ENCODE measurements at regions of chr4 and their contacts with region 1.

Region 1: GRCh38 chr4:1260418-1261106 is 11.6 kb upstream of the CTBP1 start:
- DNase-seq: no peak
- H3K4me3 ChIP-seq: no peak overlapping the region
- H3K27ac ChIP-seq: no peak overlapping the region
- H3K4me1 ChIP-seq: no peaks in the 10 kb centered on the region
- H3K27me3 ChIP-seq: no peaks in the 10 kb centered on the region
- CTCF ChIP-seq: no peak
- EP300 ChIP-seq: no peak
- POLR2A ChIP-seq: no peak

Region 2: DNA sequence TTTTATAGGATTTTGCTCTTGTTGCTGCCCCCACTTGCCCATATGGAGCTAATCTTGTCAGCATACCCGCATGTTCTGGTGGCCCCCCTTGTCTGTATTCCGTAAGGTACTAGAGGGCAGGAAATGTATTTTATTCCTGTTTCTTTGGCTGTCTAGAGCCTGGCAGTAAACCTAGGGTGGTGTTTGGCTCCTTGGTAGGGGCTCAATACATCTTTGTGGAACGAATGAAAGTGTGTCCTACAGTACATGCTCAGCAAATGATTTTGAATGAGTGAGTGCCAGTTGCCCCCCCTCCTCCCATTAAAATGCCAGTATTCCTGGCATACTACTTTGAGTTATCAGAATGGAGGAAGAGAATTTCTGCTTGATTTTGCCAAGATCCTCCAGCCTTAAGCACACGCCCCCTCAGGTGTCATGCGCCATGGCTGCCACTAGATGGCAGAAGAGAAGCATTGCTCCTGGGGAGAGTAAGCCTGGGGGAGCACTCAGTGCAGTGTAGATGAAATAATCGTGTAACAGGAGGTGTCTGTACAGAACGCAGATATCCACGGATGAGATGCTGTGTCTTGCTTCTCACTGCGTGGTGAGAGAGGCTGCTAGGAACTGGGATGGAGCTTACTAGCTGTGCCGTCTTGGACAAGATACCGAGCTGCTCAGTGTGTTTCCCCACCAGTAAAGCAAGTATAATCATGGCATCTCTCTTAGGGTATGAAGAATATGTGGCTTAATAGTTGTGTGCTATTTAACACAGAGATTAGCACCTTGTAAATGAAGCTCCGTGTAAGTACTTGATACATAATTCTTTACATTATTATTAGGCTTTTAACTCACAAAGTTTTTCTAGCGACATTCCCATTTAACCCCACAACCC is 130.0 kb before region 1 on chr4:
- in situ Hi-C with region 1: loop called in 1 of 4 experiments (anchors 5 kb)
- intact Hi-C with region 1: no loop called
- DNase-seq: peak; percentile 70
- H3K4me3 ChIP-seq: no peak overlapping the region
- H3K27ac ChIP-seq: no peak overlapping the region
- H3K4me1 ChIP-seq: no peaks in the 10 kb centered on the region
- H3K27me3 ChIP-seq: no peaks in the 10 kb centered on the region
- CTCF ChIP-seq: peak; percentile 96 to 100 (median 98)
- EP300 ChIP-seq: no peak
- POLR2A ChIP-seq: no peak

Region 3: DNA sequence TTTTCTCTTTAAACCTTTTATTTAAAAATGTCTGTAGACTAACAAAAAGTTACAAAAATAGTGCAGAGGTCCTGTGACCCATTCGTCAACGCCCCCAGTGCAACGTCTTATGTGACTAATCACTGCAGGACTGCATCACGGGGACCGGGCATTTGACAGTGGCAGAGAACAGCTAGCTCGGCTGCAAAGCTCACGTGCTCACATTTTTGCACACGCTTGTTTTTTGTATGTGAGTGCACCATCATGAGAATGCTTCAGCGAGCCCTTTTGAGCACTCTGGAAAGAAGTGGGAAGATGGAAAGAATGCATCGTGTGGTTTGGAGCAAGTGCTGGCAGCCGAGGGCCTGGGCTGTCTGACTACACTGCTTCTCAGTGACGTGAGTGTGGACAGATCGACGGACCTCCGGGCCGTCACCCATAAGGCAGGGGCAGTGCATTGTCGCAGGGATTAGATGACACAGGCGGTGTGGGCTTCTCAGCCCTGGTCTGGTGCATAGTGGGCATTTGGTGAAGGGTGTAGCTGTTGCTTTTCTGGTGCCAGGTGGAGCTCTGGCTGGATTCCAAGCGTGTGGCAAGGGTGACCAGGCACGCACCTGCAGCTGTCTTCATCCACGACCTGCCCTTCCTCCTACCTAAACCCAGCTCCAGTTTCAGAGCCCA is 105.9 kb before region 1 on chr4:
- in situ Hi-C with region 1: loop called in 3 of 4 experiments (anchors 10 to 25 kb)
- intact Hi-C with region 1: no loop called
- DNase-seq: peak; percentile 55
- H3K4me3 ChIP-seq: no peak overlapping the region
- H3K27ac ChIP-seq: no peak overlapping the region
- H3K4me1 ChIP-seq: peaks cover 3 to 12% (median 6%) of the 10 kb centered on the region in 4 donors
- H3K27me3 ChIP-seq: no peaks in the 10 kb centered on the region
- CTCF ChIP-seq: no peak
- EP300 ChIP-seq: no peak
- POLR2A ChIP-seq: no peak

Region 4: DNA sequence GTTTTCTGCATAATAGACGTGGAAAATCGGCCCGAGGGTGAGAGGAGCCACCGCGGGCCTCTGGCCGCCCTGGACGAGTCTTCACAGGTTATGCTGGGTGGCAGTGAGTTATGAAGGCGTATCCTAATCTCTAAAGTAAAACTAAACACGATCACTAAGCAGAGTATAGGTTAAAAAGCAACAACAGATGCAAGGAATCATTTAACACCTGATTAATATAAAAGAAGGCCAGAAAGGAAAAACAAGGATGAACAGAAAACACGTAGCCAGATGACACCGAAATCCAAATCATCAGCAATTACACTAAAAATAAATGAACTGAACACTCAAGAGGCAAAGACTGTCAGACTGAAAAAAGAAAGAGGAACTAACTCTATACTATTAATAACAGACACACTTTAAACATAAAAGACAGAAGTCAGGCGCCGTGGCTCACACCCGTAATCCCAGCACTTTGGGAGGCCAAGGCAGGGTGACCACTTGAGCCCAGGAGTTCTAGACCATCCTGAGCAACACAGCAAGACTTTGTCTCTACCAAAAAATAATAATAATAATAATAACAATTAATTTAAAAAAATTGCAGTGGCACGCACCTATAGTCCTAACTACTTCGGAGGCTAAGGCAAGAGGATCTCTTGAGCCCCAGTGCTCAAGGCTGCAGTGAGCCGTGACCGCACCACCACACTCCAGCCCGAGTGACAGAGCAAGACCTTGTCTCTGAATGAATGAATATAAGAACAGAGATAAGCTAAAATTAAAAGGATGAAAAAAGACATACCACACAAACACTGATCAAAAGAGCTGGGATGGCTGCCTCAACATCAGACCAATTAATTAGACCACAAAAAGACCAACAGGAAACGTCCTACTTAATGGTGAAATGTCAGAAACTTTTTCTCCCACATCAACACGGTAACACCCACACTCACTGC is 41.7 kb before region 1 on chr4:
- in situ Hi-C with region 1: no loop called
- intact Hi-C with region 1: no loop called
- DNase-seq: peak; percentile 40
- H3K4me3 ChIP-seq: no peak overlapping the region
- H3K27ac ChIP-seq: peak overlapping the region in 3 of 4 donors; percentile 28 to 57 (median 40)
- H3K4me1 ChIP-seq: peaks cover 0 to 9% (median 5%) of the 10 kb centered on the region in 4 donors
- H3K27me3 ChIP-seq: no peaks in the 10 kb centered on the region
- CTCF ChIP-seq: no peak
- EP300 ChIP-seq: no peak
- POLR2A ChIP-seq: no peak

Region 5: GRCh38 chr4:1309261-1310010 is 48.9 kb after region 1 on chr4:
- in situ Hi-C with region 1: no loop called
- intact Hi-C with region 1: no loop called
- DNase-seq: peak; percentile 79
- H3K4me3 ChIP-seq: peak overlapping the region; percentile 2 to 38 (median 14)
- H3K27ac ChIP-seq: peak overlapping the region; percentile 64 to 76 (median 69)
- H3K4me1 ChIP-seq: peaks cover 11 to 54% (median 23%) of the 10 kb centered on the region in 4 donors
- H3K27me3 ChIP-seq: no peaks in the 10 kb centered on the region
- CTCF ChIP-seq: no peak
- EP300 ChIP-seq: no peak
- POLR2A ChIP-seq: no peak

Region 6: GRCh38 chr4:1478766-1479355 is 218.3 kb after region 1 on chr4:
- in situ Hi-C with region 1: no loop called
- intact Hi-C with region 1: no loop called
- DNase-seq: no peak
- H3K4me3 ChIP-seq: no peak overlapping the region
- H3K27ac ChIP-seq: no peak overlapping the region
- H3K4me1 ChIP-seq: no peaks in the 10 kb centered on the region
- H3K27me3 ChIP-seq: no peaks in the 10 kb centered on the region
- CTCF ChIP-seq: no peak
- EP300 ChIP-seq: no peak
- POLR2A ChIP-seq: no peak

Region 7: DNA sequence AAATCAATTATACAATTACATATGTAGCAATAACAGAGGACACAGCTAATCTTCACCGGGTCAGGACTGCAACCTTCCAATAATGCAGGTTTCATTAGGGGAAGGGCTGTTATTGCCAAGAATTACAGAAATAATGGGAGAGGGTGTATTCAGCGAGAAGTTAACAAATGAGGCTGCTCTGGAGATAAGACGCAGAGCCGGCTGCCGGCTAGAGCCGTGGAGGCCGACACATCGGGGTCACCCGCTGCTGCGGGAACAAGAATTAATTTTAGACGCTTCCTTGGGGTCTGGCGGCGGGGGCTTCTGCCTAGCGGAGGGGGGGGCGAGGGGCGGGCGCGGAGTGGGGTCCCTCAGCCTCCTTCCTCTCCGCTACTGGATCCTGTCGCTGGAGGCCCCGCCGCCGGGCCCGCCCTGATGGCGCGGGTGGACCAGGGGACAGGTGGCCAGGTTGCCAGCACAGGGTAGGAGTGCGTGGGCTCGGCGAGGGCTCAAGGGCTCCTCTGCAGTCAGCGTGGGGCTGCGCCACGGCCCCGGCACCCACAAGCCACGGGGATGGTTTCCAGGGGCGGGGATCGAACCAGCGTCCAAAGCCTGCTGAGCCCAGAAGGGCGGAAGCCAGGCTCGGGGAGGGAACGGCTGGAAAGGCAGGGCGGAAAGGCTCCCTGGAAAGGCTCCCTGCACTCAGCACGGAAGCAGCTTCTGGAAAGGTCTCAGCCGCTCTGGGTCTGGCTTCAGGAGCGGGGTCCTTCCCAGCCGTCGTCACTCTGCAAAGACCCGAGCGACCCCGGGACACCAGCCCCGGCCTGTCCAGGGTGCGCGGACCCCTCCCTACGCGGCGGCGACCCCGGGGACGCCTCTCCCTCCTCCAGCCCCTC is 259.5 kb after region 1 on chr4:
- in situ Hi-C with region 1: no loop called
- intact Hi-C with region 1: no loop called
- DNase-seq: no peak
- H3K4me3 ChIP-seq: peak overlapping the region in 1 of 4 donors; percentile 18
- H3K27ac ChIP-seq: peak overlapping the region in 1 of 4 donors; percentile 39
- H3K4me1 ChIP-seq: peaks cover 0 to 5% (median 5%) of the 10 kb centered on the region in 4 donors
- H3K27me3 ChIP-seq: peaks cover 81% of the 10 kb centered on the region
- CTCF ChIP-seq: no peak
- EP300 ChIP-seq: no peak
- POLR2A ChIP-seq: no peak

Measured in transverse colon (tissue), 4 donors.